Colonic mucosa (tissue), 4 donors: ENCODE measurements at regions of chr1 and their contacts with region 1.

Region 1: DNA sequence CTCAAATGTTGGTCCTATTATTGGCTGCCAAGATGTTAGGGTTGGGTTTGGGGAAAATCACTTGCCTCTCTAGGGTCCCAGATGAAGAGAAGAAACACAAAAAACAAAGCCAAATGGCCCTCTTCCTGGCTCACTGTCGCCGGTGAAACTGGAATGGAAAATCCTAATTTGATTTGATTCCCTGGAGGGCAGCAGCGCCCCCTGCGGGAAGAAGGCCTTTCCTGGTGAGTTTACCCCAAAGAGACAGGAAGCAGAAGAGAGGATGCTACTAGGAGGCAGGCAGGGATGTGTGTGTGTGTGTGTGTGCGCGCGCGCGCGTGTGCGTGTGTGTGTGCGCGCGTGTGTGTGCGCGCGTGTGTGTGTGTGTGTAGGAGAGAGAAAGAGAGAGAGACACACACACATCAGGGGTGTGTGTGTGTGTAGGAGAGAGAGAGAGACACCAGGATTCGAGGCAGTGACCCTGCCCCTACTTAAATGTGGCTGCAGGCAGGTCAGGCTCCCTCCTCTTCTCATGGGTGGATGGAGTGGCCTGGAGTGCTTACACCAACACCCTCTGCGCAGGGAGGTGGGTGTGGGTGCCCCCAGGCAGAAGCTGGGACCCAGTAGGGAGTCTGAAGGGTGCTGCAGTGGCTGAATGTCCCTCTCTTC is 3.1 kb upstream of the SELENON start:
- DNase-seq: peak; percentile 94
- H3K4me3 ChIP-seq: no peak overlapping the region
- H3K27ac ChIP-seq: no peak overlapping the region
- H3K4me1 ChIP-seq: no peaks in the 10 kb centered on the region
- H3K27me3 ChIP-seq: no peaks in the 10 kb centered on the region
- CTCF ChIP-seq: peak; percentile 72

Region 2: GRCh38 chr1:25520446-25521061 is 276.4 kb before region 1 on chr1:
- intact Hi-C with region 1: loop called (anchors 10 kb)
- DNase-seq: peak; percentile 64
- H3K4me3 ChIP-seq: no peak overlapping the region
- H3K27ac ChIP-seq: no peak overlapping the region
- H3K4me1 ChIP-seq: no peaks in the 10 kb centered on the region
- H3K27me3 ChIP-seq: no peaks in the 10 kb centered on the region
- CTCF ChIP-seq: peak; percentile 90

Region 3: DNA sequence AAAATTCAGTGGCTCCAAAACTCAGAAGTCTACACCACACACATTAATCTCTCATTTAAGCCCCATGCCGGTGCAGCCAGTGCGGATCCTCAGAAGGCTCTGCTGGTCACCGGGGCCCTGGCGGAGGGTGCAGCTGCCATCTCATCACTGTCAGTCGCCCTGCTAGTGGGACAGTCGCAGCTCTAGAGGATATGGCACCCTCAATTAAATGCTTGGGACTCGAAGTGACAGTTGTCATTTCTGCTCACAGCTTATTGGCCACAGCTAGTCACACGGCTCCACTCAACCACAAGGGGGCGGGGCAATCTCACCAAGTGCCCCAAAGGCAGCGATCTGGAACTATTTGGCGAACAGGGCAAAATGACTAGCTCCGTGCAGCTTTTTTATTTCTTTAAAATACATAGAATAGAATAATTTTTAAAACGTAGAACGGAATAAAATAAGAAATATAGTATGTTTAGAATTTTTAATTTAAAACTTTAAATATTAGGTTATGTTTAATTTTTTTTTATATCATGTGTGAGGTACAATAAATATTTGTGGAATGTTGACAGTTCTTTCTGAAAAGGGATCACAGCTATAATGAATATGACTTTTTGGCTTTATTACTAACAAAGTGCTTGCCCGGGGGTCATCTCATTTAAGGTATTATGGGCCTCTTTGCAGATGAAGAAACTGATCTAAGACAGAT is 188.3 kb before region 1 on chr1:
- intact Hi-C with region 1: loop called (anchors 5 kb)
- DNase-seq: peak; percentile 91
- H3K4me3 ChIP-seq: no peak overlapping the region
- H3K27ac ChIP-seq: no peak overlapping the region
- H3K4me1 ChIP-seq: no peaks in the 10 kb centered on the region
- H3K27me3 ChIP-seq: no peaks in the 10 kb centered on the region
- CTCF ChIP-seq: peak; percentile 66

Region 4: GRCh38 chr1:25754470-25755181 is 42.3 kb before region 1 on chr1:
- intact Hi-C with region 1: loop called (anchors 5 kb)
- DNase-seq: no peak
- H3K4me3 ChIP-seq: no peak overlapping the region
- H3K27ac ChIP-seq: no peak overlapping the region
- H3K4me1 ChIP-seq: no peaks in the 10 kb centered on the region
- H3K27me3 ChIP-seq: no peaks in the 10 kb centered on the region
- CTCF ChIP-seq: no peak

Region 5: GRCh38 chr1:25819576-25820246 is 22.8 kb after region 1 on chr1 and contains the start of gene MTFR1L:
- intact Hi-C with region 1: no loop called
- DNase-seq: peak; percentile 95
- H3K4me3 ChIP-seq: peak within 1 kb of the TSS; percentile 76
- H3K27ac ChIP-seq: peak within 1 kb of the TSS; percentile 89
- H3K4me1 ChIP-seq: peaks cover 10% of the 10 kb centered on the region
- H3K27me3 ChIP-seq: no peaks in the 10 kb centered on the region
- CTCF ChIP-seq: no peak
- total RNA-seq, gene MTFR1L: 36.3 to 48.6 TPM

Region 6: GRCh38 chr1:25895365-25895993 is 98.5 kb after region 1 on chr1:
- intact Hi-C with region 1: no loop called
- DNase-seq: peak; percentile 90
- H3K4me3 ChIP-seq: no peak overlapping the region
- H3K27ac ChIP-seq: no peak overlapping the region
- H3K4me1 ChIP-seq: no peaks in the 10 kb centered on the region
- H3K27me3 ChIP-seq: no peaks in the 10 kb centered on the region
- CTCF ChIP-seq: peak; percentile 97